H1 (cell line): ENCODE measurements at regions of chr17 and their contacts with region 1.

Region 1: GRCh38 chr17:57982452-57983170 is 5.4 kb downstream of the VEZF1 start:
- DNase-seq: no peak
- H3K4me3 ChIP-seq: no peak overlapping the region
- H3K27ac ChIP-seq: no peak overlapping the region
- H3K4me1 ChIP-seq: peaks cover 0 to 2% (median 0%) of the 10 kb centered on the region in 4 experiments; a peak in 1 of 7 replicates
- H3K27me3 ChIP-seq: no peaks in the 10 kb centered on the region
- CTCF ChIP-seq: no peak
- EP300 ChIP-seq: no peak
- POLR2A ChIP-seq: no peak
- RAD21 ChIP-seq: no peak

Region 2: DNA sequence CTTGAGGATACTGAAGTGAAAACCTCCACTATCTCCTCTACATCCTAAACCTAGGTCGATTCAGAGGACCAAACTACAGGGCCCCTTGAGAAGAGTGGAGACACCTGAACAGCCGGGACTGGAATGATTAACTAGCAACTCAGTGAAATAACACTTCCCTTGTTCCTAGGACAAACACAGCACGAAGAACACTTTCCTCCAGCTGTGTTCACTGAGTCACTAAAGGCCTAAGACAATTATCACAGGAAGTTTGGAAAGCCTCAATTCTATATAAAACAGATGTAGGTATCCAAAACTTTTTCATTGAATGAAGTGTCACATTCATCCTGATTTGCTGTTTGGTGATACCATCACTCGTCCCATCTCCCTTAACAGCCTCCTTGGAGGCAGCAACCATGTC is 11.9 kb before region 1 on chr17:
- CTCF ChIA-PET with region 1: interaction called, 9 read pairs
- POLR2A ChIA-PET with region 1: interaction called, 27 read pairs
- DNase-seq: no peak
- H3K4me3 ChIP-seq: no peak overlapping the region
- H3K27ac ChIP-seq: no peak overlapping the region
- H3K4me1 ChIP-seq: peaks cover 0 to 3% (median 0%) of the 10 kb centered on the region in 4 experiments; a peak in 3 of 7 replicates
- H3K27me3 ChIP-seq: no peaks in the 10 kb centered on the region
- CTCF ChIP-seq: no peak
- EP300 ChIP-seq: no peak
- POLR2A ChIP-seq: no peak
- RAD21 ChIP-seq: no peak

Region 3: DNA sequence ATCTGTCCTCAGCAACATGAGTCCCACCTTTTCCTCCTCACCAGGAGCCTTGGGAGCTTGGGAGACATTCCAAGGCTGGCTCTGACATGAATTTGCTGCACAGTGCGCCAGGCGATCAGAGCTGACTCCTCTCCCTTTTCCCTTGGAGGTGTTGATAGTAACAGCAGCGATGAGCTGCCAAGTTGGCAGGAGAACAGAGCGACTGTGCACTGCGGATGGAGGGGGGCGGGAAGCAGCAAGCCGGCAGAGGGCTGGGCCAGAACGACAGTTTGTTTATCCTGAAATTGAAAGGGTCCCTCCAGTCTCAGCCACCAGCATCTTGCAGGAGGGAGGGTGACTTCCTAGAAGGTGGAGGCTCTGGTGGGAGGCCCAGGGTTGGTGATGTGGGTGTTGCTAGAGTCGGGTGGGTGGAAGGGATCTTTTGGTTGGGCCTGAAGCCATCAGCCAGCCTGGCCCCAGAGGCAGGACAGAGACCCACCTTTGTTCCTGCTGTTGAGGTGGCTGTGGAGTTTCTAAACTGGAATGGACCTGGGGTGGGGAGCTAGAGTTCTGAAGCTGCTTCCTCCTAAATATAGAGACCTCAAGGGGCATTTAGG is 78.1 kb after region 1 on chr17:
- CTCF ChIA-PET with region 1: no interaction called
- POLR2A ChIA-PET with region 1: no interaction called
- DNase-seq: no peak
- H3K4me3 ChIP-seq: no peak overlapping the region
- H3K27ac ChIP-seq: no peak overlapping the region
- H3K4me1 ChIP-seq: peaks cover 0 to 2% (median 0%) of the 10 kb centered on the region in 4 experiments; a peak in 1 of 7 replicates
- H3K27me3 ChIP-seq: no peaks in the 10 kb centered on the region
- CTCF ChIP-seq: no peak
- EP300 ChIP-seq: no peak
- POLR2A ChIP-seq: no peak
- RAD21 ChIP-seq: no peak

Region 4: GRCh38 chr17:58112970-58113631 is 130.5 kb after region 1 on chr17:
- CTCF ChIA-PET with region 1: interaction called, 10 read pairs
- POLR2A ChIA-PET with region 1: no interaction called
- DNase-seq: peak in 1 of 2 experiments; percentile 96
- H3K4me3 ChIP-seq: no peak overlapping the region
- H3K27ac ChIP-seq: no peak overlapping the region
- H3K4me1 ChIP-seq: no peaks in the 10 kb centered on the region
- H3K27me3 ChIP-seq: no peaks in the 10 kb centered on the region
- CTCF ChIP-seq: peak; percentile 86 to 99 (median 93)
- EP300 ChIP-seq: no peak
- POLR2A ChIP-seq: no peak
- RAD21 ChIP-seq: peak; percentile 98 to 99